ENCODE measurements at regions of chr3 and their contacts with region 1.

Region 1: DNA sequence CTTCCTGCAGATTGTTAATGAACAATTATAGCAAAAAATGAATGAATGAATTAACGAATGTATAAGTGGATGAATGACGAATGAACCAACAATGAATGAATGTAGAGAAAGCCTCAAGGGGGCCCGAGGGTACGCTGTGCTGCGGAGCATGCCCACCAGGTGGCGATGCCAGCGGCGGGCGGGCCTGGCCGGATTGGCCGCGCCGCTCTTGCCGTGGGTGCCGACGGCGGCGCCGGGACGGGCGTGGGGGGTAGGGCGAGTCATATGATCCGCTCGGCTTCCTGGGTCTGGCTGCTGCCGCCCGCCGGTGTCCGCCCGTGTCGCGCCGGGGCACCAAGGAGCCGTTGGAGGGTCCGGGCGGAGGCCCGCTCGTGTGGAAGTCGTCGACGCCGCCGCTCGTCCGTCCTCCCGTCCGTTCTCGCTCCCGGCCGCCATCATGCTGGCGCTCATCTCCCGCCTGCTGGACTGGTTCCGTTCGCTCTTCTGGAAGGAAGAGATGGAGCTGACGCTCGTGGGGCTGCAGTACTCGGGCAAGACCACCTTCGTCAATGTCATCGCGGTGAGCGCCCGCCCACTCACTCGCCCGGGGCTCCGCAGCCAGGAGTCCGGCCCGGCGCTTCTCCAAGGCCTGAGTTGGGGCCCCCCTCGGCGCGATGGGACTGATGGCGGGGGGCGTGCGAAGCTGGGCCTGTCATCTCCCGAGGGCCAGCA is at the start of gene ARL8B:
- DNase-seq: peak; percentile 99
- H3K4me3 ChIP-seq: peak within 1 kb of the TSS; percentile 90 to 100 (median 98)
- H3K27ac ChIP-seq: peak within 1 kb of the TSS; percentile 92 to 96 (median 94)
- H3K4me1 ChIP-seq: peaks cover 39 to 54% (median 50%) of the 10 kb centered on the region in 6 donors
- H3K27me3 ChIP-seq: no peaks in the 10 kb centered on the region
- CTCF ChIP-seq: peak; percentile 91 to 99 (median 98)
- POLR2A ChIP-seq: peak in 1 of 3 donors; percentile 54
- total RNA-seq, gene ARL8B: 55.6 to 120 (median 62.0) TPM

Region 2: DNA sequence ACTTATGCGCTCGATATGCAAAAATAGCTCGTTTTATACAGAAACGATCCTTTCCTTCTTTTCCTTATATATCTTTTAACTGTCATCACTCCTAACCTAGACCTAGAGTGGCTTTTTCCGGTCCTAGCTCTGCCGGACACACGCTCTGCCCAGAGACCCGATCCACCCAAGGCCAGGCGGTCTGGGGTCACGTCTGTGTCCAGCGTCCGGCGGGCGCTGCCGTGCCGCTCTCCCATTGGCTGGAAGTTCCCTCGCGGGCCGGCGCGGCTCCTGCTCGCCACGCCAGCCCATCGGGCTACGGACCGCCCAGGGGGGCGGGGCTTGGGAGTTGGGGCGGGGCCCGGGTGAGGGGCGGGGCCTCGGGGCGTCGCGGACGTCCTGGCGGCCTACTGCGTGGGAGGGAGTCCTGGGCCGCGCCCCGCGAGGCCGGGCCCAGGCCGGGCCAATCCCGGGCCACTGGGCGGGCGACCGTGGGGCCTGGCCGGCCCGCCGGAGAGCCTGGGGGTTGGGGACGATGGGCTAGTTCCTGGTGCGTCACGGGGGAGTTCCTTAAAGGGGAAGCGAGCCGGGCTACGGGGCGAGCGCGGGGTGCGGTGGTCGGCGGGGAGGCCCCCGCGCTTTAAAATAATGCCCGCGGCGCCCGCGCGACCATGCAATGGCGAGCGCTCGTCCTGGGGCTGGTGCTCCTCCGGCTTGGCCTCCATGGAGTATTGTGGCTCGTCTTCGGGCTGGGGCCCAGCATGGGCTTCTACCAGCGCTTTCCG is 65.2 kb after region 1 on chr3 and contains the start of gene EDEM1:
- intact Hi-C with region 1: loop called (anchors 5 kb)
- DNase-seq: peak; percentile 100
- H3K4me3 ChIP-seq: peak within 1 kb of the TSS; percentile 72 to 99 (median 92)
- H3K27ac ChIP-seq: peak within 1 kb of the TSS; percentile 89 to 100 (median 99)
- H3K4me1 ChIP-seq: peaks cover 39 to 86% (median 84%) of the 10 kb centered on the region in 6 donors
- H3K27me3 ChIP-seq: no peaks in the 10 kb centered on the region
- CTCF ChIP-seq: peak in 2 of 11 experiments; percentile 24 to 52
- POLR2A ChIP-seq: peak in 2 of 3 donors; percentile 76 to 84
- total RNA-seq, gene EDEM1: 69.0 to 174 (median 76.4) TPM